ENCODE measurements at regions of chr10 and their contacts with region 1.

Region 1: GRCh38 chr10:79292891-79293746 is 54.1 kb upstream of the PPIF start:
- DNase-seq: peak; percentile 62 to 93 (median 90)
- ATAC-seq: peak; percentile 95
- H3K4me3 ChIP-seq: no peak overlapping the region
- H3K27ac ChIP-seq: no peak overlapping the region
- H3K4me1 ChIP-seq: peaks cover 0 to 16% of the 10 kb centered on the region in 2 experiments; a peak in 1 of 5 replicates
- H3K27me3 ChIP-seq: no peaks in the 10 kb centered on the region
- CTCF ChIP-seq: peak; percentile 69 to 80 (median 73)
- EP300 ChIP-seq: no peak
- POLR2A ChIP-seq: no peak
- RAD21 ChIP-seq: peak; percentile 33 to 38

Region 2: GRCh38 chr10:79137826-79138225 is 155.3 kb before region 1 on chr10:
- CTCF ChIA-PET with region 1: no interaction called
- POLR2A ChIA-PET with region 1: no interaction called
- in situ Hi-C with region 1: no loop called
- intact Hi-C with region 1: no loop called
- DNase-seq: no peak
- ATAC-seq: no peak
- H3K4me3 ChIP-seq: no peak overlapping the region
- H3K27ac ChIP-seq: no peak overlapping the region
- H3K4me1 ChIP-seq: peaks cover 63 to 66% of the 10 kb centered on the region in 2 experiments
- H3K27me3 ChIP-seq: no peaks in the 10 kb centered on the region
- CTCF ChIP-seq: no peak
- EP300 ChIP-seq: no peak
- POLR2A ChIP-seq: no peak
- RAD21 ChIP-seq: no peak

Region 3: GRCh38 chr10:79322616-79323543 is 29.8 kb after region 1 on chr10:
- CTCF ChIA-PET with region 1: no interaction called
- POLR2A ChIA-PET with region 1: no interaction called
- in situ Hi-C with region 1: no loop called
- intact Hi-C with region 1: no loop called
- DNase-seq: no peak
- ATAC-seq: peak; percentile 37
- H3K4me3 ChIP-seq: no peak overlapping the region
- H3K27ac ChIP-seq: no peak overlapping the region
- H3K4me1 ChIP-seq: peaks cover 2 to 8% of the 10 kb centered on the region in 2 experiments; a peak in 4 of 5 replicates
- H3K27me3 ChIP-seq: peaks cover 7 to 58% of the 10 kb centered on the region in 2 experiments
- CTCF ChIP-seq: no peak
- EP300 ChIP-seq: no peak
- POLR2A ChIP-seq: no peak
- RAD21 ChIP-seq: no peak

Region 4: DNA sequence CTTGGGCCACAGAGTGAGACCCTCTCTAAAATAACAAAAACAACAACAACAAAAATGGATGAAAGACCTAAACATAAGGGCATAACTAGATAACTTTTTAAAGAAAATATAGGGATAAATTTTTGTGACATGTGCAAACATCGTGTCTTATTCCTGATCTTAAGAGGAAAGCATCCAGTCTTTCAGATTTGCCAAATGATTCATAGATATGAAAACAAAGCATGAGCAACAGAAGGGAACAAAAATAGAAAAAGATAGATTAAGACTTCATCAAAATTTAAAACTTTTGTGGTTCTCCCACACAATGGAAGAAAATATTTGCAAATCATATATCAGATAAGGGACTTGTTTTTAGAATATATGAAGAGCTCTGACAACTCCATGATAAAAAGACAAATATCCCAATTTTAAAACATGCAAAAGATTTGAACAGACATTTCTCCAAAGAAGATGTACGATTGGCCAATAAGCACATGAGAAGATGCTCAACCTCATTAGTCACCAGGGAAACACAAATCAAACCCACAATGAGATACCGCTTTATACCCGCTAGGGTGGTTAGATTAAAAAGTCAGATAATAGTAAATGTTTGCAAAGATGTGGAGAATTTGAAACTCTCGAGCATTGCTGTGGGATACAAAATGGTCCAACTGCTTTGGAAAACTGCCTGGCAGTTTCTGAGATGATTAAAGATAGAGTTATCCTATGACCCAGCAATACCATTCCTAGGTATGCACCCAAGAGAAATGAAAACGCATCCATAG is 74.5 kb after region 1 on chr10:
- CTCF ChIA-PET with region 1: no interaction called
- POLR2A ChIA-PET with region 1: no interaction called
- in situ Hi-C with region 1: no loop called
- intact Hi-C with region 1: loop called (anchors 2 kb)
- DNase-seq: no peak
- ATAC-seq: no peak
- H3K4me3 ChIP-seq: no peak overlapping the region
- H3K27ac ChIP-seq: no peak overlapping the region
- H3K4me1 ChIP-seq: no peaks in the 10 kb centered on the region
- H3K27me3 ChIP-seq: peaks cover 4% of the 10 kb centered on the region in 2 experiments; a peak in 3 of 5 replicates
- CTCF ChIP-seq: no peak
- EP300 ChIP-seq: no peak
- POLR2A ChIP-seq: no peak
- RAD21 ChIP-seq: no peak